Naive thymus-derived CD4-positive, alpha-beta T cell (primary cell): ENCODE measurements at regions of chr3 and their contacts with region 1.

Region 1: DNA sequence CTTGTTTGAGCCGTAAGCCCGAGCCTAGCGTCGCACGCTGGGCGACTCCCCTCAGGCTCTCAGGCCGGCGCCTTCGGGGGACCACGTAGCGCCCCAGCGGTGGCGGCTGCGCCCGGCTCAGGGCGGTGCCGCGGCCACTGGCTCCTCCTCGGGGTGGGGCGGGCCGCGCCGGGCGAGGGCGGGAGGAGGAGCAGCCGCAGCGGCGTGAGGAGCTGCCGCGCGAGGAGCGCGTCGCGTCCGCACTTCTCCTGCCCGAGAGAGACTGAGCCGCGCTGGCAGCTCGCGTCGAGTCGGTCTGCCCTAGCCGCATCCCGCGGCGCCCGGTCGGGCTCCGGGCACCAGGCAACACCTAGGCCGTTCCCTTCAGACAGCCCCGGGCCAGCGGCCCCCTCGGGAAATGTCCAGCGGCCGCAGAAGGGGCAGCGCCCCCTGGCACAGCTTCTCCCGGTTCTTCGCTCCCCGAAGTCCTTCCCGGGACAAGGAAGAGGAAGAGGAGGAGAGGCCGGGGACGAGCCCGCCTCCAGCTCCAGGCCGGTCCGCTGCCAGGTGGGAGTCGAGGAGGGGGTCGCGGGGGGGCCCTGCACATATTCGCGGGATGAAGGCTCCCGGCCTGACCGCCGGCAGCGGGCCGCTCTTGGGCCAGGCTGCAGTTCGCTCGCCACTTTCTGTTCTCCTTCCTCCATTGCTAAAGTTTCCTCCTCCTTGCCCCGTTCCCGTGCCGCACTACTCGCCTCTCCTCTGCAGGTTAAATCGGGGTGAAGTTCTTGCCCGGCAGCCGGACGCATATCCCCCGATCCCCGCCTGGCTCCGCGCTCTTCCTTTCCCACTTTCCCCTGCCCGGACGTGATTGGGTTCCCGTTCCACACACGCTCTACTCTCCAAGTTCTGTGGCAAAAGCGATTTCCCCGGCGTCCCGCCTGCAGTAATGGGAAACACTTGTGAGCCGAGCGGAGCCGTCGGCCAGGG is at the start of gene CRYBG3:
- DNase-seq: peak; percentile 64 to 93 (median 81)
- ATAC-seq: peak; percentile 98
- H3K4me3 ChIP-seq: peak within 1 kb of the TSS; percentile 83
- H3K4me3 Mint-ChIP-seq: peak within 1 kb of the TSS; percentile 93 to 98 (median 95)
- H3K27ac ChIP-seq: peak within 1 kb of the TSS; percentile 52
- H3K27ac Mint-ChIP-seq: peak within 1 kb of the TSS; percentile 76 to 98 (median 87)
- H3K4me1 ChIP-seq: peaks cover 0 to 6% of the 10 kb centered on the region in 2 donors
- H3K4me1 Mint-ChIP-seq: peaks cover 14 to 36% (median 21%) of the 10 kb centered on the region in 7 donors
- H3K27me3 ChIP-seq: peaks cover 0 to 3% of the 10 kb centered on the region in 2 donors
- H3K27me3 Mint-ChIP-seq: peaks cover 4 to 29% (median 26%) of the 10 kb centered on the region in 5 donors
- total RNA-seq, gene CRYBG3: 1.8 to 11.2 (median 5.1) TPM

Region 2: GRCh38 chr3:97197101-97197500 is 625.0 kb before region 1 on chr3:
- CTCF ChIA-PET with region 1: no interaction called
- POLR2A ChIA-PET with region 1: no interaction called
- intact Hi-C with region 1: no loop called
- DNase-seq: no peak
- ATAC-seq: no peak
- H3K4me3 ChIP-seq: no peak overlapping the region
- H3K4me3 Mint-ChIP-seq: no peak overlapping the region
- H3K27ac ChIP-seq: no peak overlapping the region
- H3K27ac Mint-ChIP-seq: no peak overlapping the region
- H3K4me1 ChIP-seq: no peaks in the 10 kb centered on the region
- H3K4me1 Mint-ChIP-seq: no peaks in the 10 kb centered on the region
- H3K27me3 ChIP-seq: no peaks in the 10 kb centered on the region
- H3K27me3 Mint-ChIP-seq: no peaks in the 10 kb centered on the region

Region 3: DNA sequence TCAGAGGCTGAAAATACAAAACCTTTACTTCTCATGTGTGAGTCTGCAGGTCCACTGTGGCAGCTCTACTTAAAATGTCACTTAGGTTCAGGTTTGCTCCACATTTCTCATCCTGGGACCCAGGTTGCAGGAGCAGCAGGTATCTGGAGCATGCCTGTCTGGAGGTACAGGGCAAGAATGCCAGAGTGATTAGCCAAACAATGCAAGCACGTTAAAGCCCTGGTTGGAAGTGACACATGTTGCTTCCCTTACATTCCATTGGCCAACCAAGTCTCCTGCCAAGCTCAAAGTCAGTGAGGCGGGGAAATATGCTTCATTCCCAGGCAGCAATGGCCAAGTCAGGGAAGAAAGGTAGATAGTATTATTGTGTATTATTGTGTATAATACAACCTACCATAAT is 134.4 kb before region 1 on chr3:
- CTCF ChIA-PET with region 1: no interaction called
- POLR2A ChIA-PET with region 1: no interaction called
- intact Hi-C with region 1: no loop called
- DNase-seq: no peak
- ATAC-seq: no peak
- H3K4me3 ChIP-seq: no peak overlapping the region
- H3K4me3 Mint-ChIP-seq: no peak overlapping the region
- H3K27ac ChIP-seq: no peak overlapping the region
- H3K27ac Mint-ChIP-seq: no peak overlapping the region
- H3K4me1 ChIP-seq: no peaks in the 10 kb centered on the region
- H3K4me1 Mint-ChIP-seq: no peaks in the 10 kb centered on the region
- H3K27me3 ChIP-seq: no peaks in the 10 kb centered on the region
- H3K27me3 Mint-ChIP-seq: peaks cover 0 to 17% (median 7%) of the 10 kb centered on the region in 5 donors

Region 4: GRCh38 chr3:97764407-97765238 is 57.5 kb before region 1 on chr3 and contains the start of gene ARL6:
- CTCF ChIA-PET with region 1: no interaction called
- POLR2A ChIA-PET with region 1: interaction called, 5 read pairs
- intact Hi-C with region 1: loop called (anchors 1 to 2 kb)
- DNase-seq: peak; percentile 53 to 78 (median 73)
- ATAC-seq: peak; percentile 95
- H3K4me3 ChIP-seq: peak within 1 kb of the TSS; percentile 98
- H3K4me3 Mint-ChIP-seq: peak within 1 kb of the TSS; percentile 91 to 99 (median 98)
- H3K27ac ChIP-seq: peak within 1 kb of the TSS; percentile 78
- H3K27ac Mint-ChIP-seq: peak within 1 kb of the TSS; percentile 90 to 97 (median 93)
- H3K4me1 ChIP-seq: peaks cover 5 to 15% of the 10 kb centered on the region in 2 donors
- H3K4me1 Mint-ChIP-seq: peaks cover 9 to 36% (median 27%) of the 10 kb centered on the region in 7 donors
- H3K27me3 ChIP-seq: no peaks in the 10 kb centered on the region
- H3K27me3 Mint-ChIP-seq: peaks cover 0 to 4% (median 0%) of the 10 kb centered on the region in 5 donors
- total RNA-seq, gene ARL6: 3.0 to 7.5 (median 5.8) TPM

Region 5: GRCh38 chr3:97871801-97872524 is 49.9 kb after region 1 on chr3:
- CTCF ChIA-PET with region 1: no interaction called
- POLR2A ChIA-PET with region 1: no interaction called
- intact Hi-C with region 1: loop called in 1 of 2 experiments (anchors 2 kb)
- DNase-seq: peak in 3 of 9 donors; percentile 1 to 21 (median 13)
- ATAC-seq: peak; percentile 31
- H3K4me3 ChIP-seq: peak overlapping the region; percentile 14
- H3K4me3 Mint-ChIP-seq: peak overlapping the region in 7 of 10 donors; percentile 26 to 73 (median 58)
- H3K27ac ChIP-seq: no peak overlapping the region
- H3K27ac Mint-ChIP-seq: peak overlapping the region in 5 of 9 donors; percentile 55 to 90 (median 74)
- H3K4me1 ChIP-seq: peaks cover 0 to 6% of the 10 kb centered on the region in 2 donors
- H3K4me1 Mint-ChIP-seq: peaks cover 0 to 22% (median 15%) of the 10 kb centered on the region in 7 donors
- H3K27me3 ChIP-seq: no peaks in the 10 kb centered on the region
- H3K27me3 Mint-ChIP-seq: no peaks in the 10 kb centered on the region

Region 6: GRCh38 chr3:97940034-97940433 is 117.9 kb after region 1 on chr3:
- CTCF ChIA-PET with region 1: interaction called, 3 read pairs
- POLR2A ChIA-PET with region 1: no interaction called
- intact Hi-C with region 1: loop called in 1 of 2 experiments (anchors 10 kb)
- DNase-seq: peak in 6 of 9 donors; percentile 5 to 41 (median 14)
- ATAC-seq: peak; percentile 48
- H3K4me3 ChIP-seq: no peak overlapping the region
- H3K4me3 Mint-ChIP-seq: no peak overlapping the region
- H3K27ac ChIP-seq: no peak overlapping the region
- H3K27ac Mint-ChIP-seq: peak overlapping the region in 2 of 9 donors; percentile 24 to 72
- H3K4me1 ChIP-seq: no peaks in the 10 kb centered on the region
- H3K4me1 Mint-ChIP-seq: peaks cover 0 to 11% (median 0%) of the 10 kb centered on the region in 7 donors
- H3K27me3 ChIP-seq: no peaks in the 10 kb centered on the region
- H3K27me3 Mint-ChIP-seq: no peaks in the 10 kb centered on the region

Region 7: GRCh38 chr3:98901392-98902350 is 1079.6 kb after region 1 on chr3 and contains the start of gene DCBLD2:
- CTCF ChIA-PET with region 1: no interaction called
- POLR2A ChIA-PET with region 1: no interaction called
- intact Hi-C with region 1: loop called (anchors 2 to 5 kb)
- DNase-seq: peak; percentile 90 to 96 (median 94)
- ATAC-seq: peak; percentile 99
- H3K4me3 ChIP-seq: peak within 1 kb of the TSS; percentile 86
- H3K4me3 Mint-ChIP-seq: peak within 1 kb of the TSS; percentile 89 to 97 (median 94)
- H3K27ac ChIP-seq: peak within 1 kb of the TSS; percentile 78
- H3K27ac Mint-ChIP-seq: peak within 1 kb of the TSS; percentile 44 to 96 (median 86)
- H3K4me1 ChIP-seq: peaks cover 5% of the 10 kb centered on the region in 2 donors
- H3K4me1 Mint-ChIP-seq: peaks cover 14 to 27% (median 22%) of the 10 kb centered on the region in 7 donors
- H3K27me3 ChIP-seq: no peaks in the 10 kb centered on the region
- H3K27me3 Mint-ChIP-seq: peaks cover 0 to 30% (median 8%) of the 10 kb centered on the region in 5 donors
- total RNA-seq, gene DCBLD2: 1.9 to 4.7 (median 2.9) TPM